ENCODE measurements at regions of chr14 and their contacts with region 1.

Region 1: GRCh38 chr14:70972107-70972976 is 65.1 kb downstream of the PCNX1 start:
- DNase-seq: peak in 2 of 3 donors; percentile 72 to 97
- ATAC-seq: peak; percentile 90
- H3K4me3 ChIP-seq: no peak overlapping the region
- H3K4me1 ChIP-seq: no peaks in the 10 kb centered on the region
- CTCF ChIP-seq: peak; percentile 74

Region 2: GRCh38 chr14:70816525-70816924 is 155.8 kb before region 1 on chr14:
- intact Hi-C with region 1: loop called (anchors 5 to 10 kb)
- DNase-seq: no peak
- ATAC-seq: no peak
- H3K4me3 ChIP-seq: no peak overlapping the region
- H3K4me1 ChIP-seq: no peaks in the 10 kb centered on the region
- CTCF ChIP-seq: no peak

Region 3: DNA sequence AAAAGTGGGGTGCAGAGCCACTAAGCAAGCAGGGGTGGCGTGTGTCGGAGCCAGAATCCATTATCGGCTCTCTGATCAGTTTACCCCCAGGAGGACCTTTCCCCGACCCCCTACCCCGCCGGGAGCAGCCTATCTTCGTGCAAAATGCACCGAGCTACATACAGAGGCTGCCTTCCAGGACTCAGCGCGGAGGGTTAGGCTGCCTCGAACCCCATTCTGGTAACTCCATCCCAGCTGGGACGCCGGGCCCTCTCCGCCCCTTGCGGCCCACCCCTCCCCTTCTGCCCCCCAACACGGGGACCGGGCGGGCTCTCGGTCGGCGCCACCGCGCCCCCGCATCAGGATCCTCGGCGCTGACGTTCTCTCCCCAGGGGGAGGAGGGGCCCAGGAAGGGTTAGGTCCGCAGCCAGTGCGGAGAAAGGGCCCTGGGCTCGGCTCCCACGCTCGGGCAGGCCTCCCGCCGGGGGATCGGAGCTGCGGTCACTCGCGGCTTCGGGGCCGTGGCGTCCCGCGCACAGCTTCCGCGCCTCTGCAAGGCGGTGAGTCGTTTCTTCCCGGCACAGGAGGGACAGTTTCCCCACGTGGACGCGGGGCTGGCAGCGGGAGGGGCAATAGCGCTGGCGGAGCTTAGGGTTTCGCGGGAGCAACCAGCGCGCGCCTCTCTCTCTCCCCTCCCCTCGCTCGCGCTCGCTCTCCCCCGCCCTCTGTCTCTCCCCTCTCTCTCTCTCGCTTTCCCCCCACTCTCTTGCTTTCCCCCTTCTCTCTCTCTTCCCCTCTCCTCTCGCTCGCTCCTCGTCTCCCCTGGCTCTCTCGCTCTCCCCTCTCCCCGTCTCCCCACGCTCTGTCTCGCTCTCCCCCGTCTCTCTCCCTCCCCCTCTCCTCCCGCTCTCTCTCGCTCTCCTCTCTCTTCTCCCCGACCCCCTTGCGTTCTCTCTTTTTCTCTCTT is 150.5 kb before region 1 on chr14:
- intact Hi-C with region 1: loop called (anchors 5 to 10 kb)
- DNase-seq: peak; percentile 51 to 66 (median 54)
- ATAC-seq: peak; percentile 50
- H3K4me3 ChIP-seq: no peak overlapping the region
- H3K4me1 ChIP-seq: peaks cover 4% of the 10 kb centered on the region
- CTCF ChIP-seq: no peak

Region 4: GRCh38 chr14:70873627-70874026 is 98.7 kb before region 1 on chr14:
- intact Hi-C with region 1: loop called in 1 of 2 experiments (anchors 5 kb)
- DNase-seq: peak in 1 of 3 donors; percentile 26
- ATAC-seq: no peak
- H3K4me3 ChIP-seq: no peak overlapping the region
- H3K4me1 ChIP-seq: no peaks in the 10 kb centered on the region
- CTCF ChIP-seq: no peak